HepG2 (cell line): ENCODE measurements at regions of chr6 and their contacts with region 1.

Region 1: GRCh38 chr6:16420715-16421461 is 182.5 kb downstream of the GMPR start:
- DNase-seq: no peak
- ATAC-seq: no peak
- H3K4me3 ChIP-seq: no peak overlapping the region
- H3K27ac ChIP-seq: no peak overlapping the region
- H3K4me1 ChIP-seq: no peaks in the 10 kb centered on the region
- H3K27me3 ChIP-seq: no peaks in the 10 kb centered on the region
- CTCF ChIP-seq: no peak
- EP300 ChIP-seq: no peak
- POLR2A ChIP-seq: no peak
- RAD21 ChIP-seq: no peak

Region 2: DNA sequence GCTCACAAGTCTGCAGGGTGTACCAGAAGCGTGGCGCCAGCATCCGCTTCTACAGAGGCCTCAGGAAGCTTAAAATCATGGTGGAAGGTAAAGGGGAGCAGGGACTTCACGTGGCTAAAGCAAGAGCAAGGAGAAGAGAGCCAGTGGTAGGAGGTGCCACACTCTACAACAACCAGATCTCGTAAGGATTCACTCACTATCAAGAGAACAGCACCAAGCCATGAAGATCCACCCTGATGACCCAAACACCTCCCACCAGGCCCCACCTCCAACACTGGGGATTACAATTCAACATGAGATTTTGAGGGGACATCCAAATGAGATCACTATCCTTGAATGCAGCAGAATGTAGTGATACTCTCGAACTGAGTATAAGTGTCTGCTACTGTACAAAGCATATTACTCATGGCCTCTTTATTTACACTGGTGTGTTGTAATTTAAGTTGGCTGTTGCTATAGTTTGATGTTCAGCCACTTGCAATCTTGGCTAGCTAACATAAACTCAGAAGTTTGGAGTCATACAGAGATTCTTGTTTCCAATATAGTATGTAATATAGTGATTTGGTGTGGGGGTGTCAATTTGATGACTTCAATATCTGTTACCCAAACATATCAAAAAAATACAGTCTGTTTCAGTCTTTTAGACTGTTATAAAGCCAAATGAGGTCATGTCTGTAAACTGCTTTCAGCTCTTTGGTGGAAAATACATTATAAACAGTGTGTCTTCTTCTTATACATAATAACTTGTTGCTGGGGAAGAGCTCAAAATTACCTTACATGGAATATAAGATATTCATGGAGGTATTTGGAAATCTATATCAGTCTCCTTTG is 331.4 kb before region 1 on chr6:
- CTCF ChIA-PET with region 1: no interaction called
- POLR2A ChIA-PET with region 1: no interaction called
- in situ Hi-C with region 1: no loop called
- intact Hi-C with region 1: no loop called
- DNase-seq: no peak
- ATAC-seq: no peak
- H3K4me3 ChIP-seq: no peak overlapping the region
- H3K27ac ChIP-seq: no peak overlapping the region
- H3K4me1 ChIP-seq: no peaks in the 10 kb centered on the region
- H3K27me3 ChIP-seq: peaks cover 0 to 12% of the 10 kb centered on the region in 2 experiments; a peak in 2 of 5 replicates
- CTCF ChIP-seq: no peak
- EP300 ChIP-seq: no peak
- POLR2A ChIP-seq: no peak
- RAD21 ChIP-seq: no peak

Region 3: DNA sequence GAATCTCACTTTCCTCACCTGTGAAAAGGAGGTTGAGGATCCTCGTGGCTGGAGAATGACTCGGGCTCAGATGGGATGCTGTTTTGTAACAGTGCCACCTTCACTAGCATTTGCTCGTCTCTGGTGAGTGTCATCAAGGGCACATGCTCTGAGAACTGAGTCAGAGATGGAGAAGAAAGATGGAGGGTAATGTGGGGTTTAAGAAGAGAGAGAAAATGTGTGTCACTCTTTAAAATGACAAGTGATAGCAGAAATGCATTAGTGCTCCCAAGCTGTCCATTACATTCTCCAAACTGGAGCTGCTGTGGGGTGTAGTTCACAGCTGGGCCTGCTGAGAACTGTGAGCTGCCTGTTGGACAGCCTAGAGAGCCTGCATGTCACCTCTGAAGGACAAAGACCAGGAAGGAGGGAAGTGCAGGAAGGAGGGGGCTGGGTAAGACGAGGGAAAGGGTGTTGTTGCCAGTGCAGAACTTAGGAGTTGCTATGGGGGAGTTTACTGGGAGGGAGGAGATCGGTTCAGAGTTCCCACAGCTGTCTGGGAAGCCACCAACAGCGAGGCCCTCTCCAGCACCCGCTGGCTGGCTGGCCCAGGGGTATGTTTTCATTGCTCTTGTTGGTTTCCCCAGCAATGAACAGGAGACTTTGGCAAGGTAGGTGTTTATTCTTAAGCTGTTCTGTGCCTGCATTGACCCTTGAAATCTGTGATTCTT is 162.7 kb before region 1 on chr6:
- CTCF ChIA-PET with region 1: no interaction called
- POLR2A ChIA-PET with region 1: no interaction called
- in situ Hi-C with region 1: no loop called
- intact Hi-C with region 1: no loop called
- DNase-seq: no peak
- ATAC-seq: peak; percentile 68
- H3K4me3 ChIP-seq: no peak overlapping the region
- H3K27ac ChIP-seq: no peak overlapping the region
- H3K4me1 ChIP-seq: no peaks in the 10 kb centered on the region
- H3K27me3 ChIP-seq: peaks cover 0 to 12% of the 10 kb centered on the region in 2 experiments; a peak in 3 of 5 replicates
- CTCF ChIP-seq: no peak
- EP300 ChIP-seq: no peak
- POLR2A ChIP-seq: no peak
- RAD21 ChIP-seq: no peak

Region 4: DNA sequence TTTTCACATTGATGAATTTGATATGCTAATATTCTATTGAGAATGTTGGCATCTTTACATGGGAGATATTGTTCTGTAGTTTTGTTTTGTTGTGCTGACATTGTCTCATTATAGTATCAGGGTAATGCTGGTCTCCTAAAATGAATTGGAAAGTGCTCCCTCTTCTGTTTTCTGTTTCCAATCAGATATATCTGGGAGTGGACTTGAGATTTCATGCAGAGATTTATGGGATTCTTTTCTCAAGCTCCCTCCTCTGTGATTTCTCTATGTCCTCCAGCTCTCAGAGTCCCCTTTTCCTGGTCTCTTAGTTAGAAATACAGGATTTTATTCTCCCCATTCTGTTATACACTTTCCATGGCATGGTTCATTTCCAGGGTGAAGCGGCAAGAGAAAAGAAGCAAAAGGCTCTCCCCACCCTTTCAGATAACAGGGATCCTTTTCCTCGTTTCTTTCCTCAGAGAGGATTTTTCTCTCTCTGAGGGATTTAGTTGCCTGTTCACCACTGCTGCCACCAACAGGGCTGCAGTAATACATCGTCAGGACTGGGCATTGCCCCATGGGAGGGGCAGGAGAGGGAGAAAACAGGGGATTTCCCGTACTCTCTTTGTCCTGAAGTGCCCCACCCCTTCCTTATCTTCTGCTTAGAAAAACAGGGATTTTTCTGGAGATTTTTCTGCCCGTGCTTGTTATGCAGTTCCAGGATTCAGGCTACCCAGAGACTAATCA is 621.7 kb after region 1 on chr6:
- CTCF ChIA-PET with region 1: no interaction called
- POLR2A ChIA-PET with region 1: no interaction called
- in situ Hi-C with region 1: no loop called
- intact Hi-C with region 1: loop called (anchors 10 kb)
- DNase-seq: peak; percentile 20
- ATAC-seq: peak; percentile 86
- H3K4me3 ChIP-seq: no peak overlapping the region
- H3K27ac ChIP-seq: no peak overlapping the region
- H3K4me1 ChIP-seq: no peaks in the 10 kb centered on the region
- H3K27me3 ChIP-seq: no peaks in the 10 kb centered on the region; a peak in 1 of 5 replicates
- CTCF ChIP-seq: peak; percentile 48
- EP300 ChIP-seq: no peak
- POLR2A ChIP-seq: no peak
- RAD21 ChIP-seq: no peak